ENCODE measurements at regions of chr18 and their contacts with region 1.

Region 1: GRCh38 chr18:54149078-54149697 is 75.3 kb downstream of the MBD2 start:
- DNase-seq: peak in 1 of 9 donors; percentile 48
- ATAC-seq: no peak
- H3K4me3 ChIP-seq: no peak overlapping the region
- H3K4me3 Mint-ChIP-seq: peak overlapping the region in 2 of 10 donors; percentile 30 to 60
- H3K27ac ChIP-seq: no peak overlapping the region
- H3K27ac Mint-ChIP-seq: peak overlapping the region in 6 of 9 donors; percentile 5 to 91 (median 53)
- H3K4me1 ChIP-seq: no peaks in the 10 kb centered on the region
- H3K4me1 Mint-ChIP-seq: peaks cover 0 to 44% (median 8%) of the 10 kb centered on the region in 7 donors
- H3K27me3 ChIP-seq: no peaks in the 10 kb centered on the region
- H3K27me3 Mint-ChIP-seq: no peaks in the 10 kb centered on the region

Region 2: DNA sequence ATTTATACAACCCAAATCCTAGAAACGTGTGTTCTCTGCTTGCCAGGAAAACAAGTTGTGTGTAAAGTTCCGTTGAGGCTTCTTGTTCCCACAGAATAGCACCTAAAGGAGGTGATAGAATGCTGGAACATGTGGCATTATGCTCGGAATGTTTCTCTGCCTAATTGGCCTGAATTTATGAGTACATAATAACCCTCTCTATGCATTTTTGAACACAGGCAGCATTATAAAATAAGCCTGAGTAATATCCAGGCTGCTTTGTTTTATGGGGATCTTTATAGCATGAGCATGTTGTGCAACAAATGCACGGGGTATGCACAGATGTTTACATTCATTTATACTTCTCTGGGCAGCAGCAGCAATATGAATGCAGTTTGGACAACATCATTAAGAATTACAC is 310.4 kb before region 1 on chr18:
- CTCF ChIA-PET with region 1: no interaction called
- POLR2A ChIA-PET with region 1: no interaction called
- intact Hi-C with region 1: no loop called
- DNase-seq: no peak
- ATAC-seq: no peak
- H3K4me3 ChIP-seq: no peak overlapping the region
- H3K4me3 Mint-ChIP-seq: no peak overlapping the region
- H3K27ac ChIP-seq: no peak overlapping the region
- H3K27ac Mint-ChIP-seq: no peak overlapping the region
- H3K4me1 ChIP-seq: no peaks in the 10 kb centered on the region
- H3K4me1 Mint-ChIP-seq: no peaks in the 10 kb centered on the region
- H3K27me3 ChIP-seq: no peaks in the 10 kb centered on the region
- H3K27me3 Mint-ChIP-seq: peaks cover 0 to 4% (median 0%) of the 10 kb centered on the region in 5 donors

Region 3: GRCh38 chr18:53886058-53886457 is 263.1 kb before region 1 on chr18:
- CTCF ChIA-PET with region 1: no interaction called
- POLR2A ChIA-PET with region 1: no interaction called
- intact Hi-C with region 1: no loop called
- DNase-seq: no peak
- ATAC-seq: no peak
- H3K4me3 ChIP-seq: no peak overlapping the region
- H3K4me3 Mint-ChIP-seq: no peak overlapping the region
- H3K27ac ChIP-seq: no peak overlapping the region
- H3K27ac Mint-ChIP-seq: no peak overlapping the region
- H3K4me1 ChIP-seq: no peaks in the 10 kb centered on the region
- H3K4me1 Mint-ChIP-seq: no peaks in the 10 kb centered on the region
- H3K27me3 ChIP-seq: no peaks in the 10 kb centered on the region
- H3K27me3 Mint-ChIP-seq: peaks cover 0 to 10% (median 8%) of the 10 kb centered on the region in 5 donors

Region 4: DNA sequence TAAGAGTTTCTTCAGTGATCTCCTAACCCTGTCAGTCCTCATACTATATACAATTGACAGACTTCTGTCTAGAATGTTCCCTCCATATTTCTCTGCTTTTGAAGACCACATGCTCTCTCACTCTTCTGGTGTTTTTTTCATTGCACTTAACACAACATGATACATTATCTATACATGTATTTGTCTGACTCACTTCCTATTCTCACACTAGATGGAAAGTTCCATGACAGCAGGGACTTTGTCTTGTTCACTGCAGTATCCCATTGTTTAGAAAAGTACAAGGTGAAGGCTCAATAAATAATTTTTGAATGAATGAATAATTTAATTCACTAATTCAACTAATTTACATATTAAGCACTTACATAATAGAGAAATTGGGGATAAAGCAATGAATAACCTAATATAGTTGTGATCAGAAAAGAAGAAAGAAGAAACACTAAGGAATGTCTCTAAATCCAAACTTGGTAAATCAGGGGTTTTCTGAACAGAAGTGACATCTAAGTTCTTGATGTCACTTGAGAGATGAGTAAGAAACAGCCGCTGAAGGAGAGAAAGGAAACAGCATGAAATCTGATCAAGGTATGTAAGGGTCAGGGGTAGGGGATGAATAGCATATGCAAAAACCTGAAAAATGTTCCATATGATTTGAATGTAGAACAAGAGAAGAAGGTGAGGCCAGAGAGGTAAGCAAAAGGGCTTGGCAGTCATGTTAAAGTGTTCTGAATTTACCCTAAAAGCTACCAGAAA is 32.8 kb after region 1 on chr18:
- CTCF ChIA-PET with region 1: no interaction called
- POLR2A ChIA-PET with region 1: no interaction called
- intact Hi-C with region 1: loop called in 1 of 2 experiments (anchors 2 kb)
- DNase-seq: no peak
- ATAC-seq: no peak
- H3K4me3 ChIP-seq: no peak overlapping the region
- H3K4me3 Mint-ChIP-seq: no peak overlapping the region
- H3K27ac ChIP-seq: no peak overlapping the region
- H3K27ac Mint-ChIP-seq: no peak overlapping the region
- H3K4me1 ChIP-seq: no peaks in the 10 kb centered on the region
- H3K4me1 Mint-ChIP-seq: peaks cover under 1 to 9% (median 4%) of the 10 kb centered on the region in 7 donors
- H3K27me3 ChIP-seq: no peaks in the 10 kb centered on the region
- H3K27me3 Mint-ChIP-seq: no peaks in the 10 kb centered on the region

Region 5: DNA sequence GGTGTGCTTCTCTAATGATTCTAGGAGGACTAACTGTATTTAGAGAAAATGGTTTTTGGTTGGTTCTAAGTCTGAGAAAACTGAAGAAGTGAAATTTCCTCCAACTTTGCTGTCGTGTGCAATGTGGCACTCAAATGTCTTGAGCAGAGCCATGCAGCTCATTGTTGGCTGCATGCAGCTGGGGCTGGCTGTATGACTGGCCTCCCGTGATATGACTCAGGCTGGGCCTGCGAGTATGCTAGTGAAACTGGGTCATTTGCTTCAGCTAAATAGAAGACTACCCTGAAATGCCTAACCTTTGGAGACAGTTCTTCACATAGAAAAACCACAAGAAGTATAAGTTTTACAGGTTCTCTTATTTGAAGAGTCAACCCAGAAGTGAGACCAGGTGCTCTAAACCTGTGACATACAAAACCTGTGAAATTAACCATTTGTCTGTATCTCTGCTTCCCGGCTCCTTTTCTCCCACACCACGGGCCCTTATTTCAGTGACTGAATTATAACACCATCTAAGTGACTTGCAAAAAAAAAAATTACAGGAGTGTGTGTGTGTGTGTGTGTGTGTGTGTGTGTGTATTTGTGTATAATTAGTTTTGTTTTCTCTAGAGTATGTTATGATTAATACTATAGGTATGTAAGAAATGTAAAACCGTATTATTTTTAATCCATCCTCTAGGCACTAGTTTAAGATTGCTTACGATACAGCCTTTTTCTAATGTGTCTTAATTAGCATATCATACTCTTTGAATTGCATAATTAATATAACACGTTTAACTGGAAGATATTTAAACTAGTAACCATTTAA is 136.0 kb after region 1 on chr18:
- CTCF ChIA-PET with region 1: no interaction called
- POLR2A ChIA-PET with region 1: no interaction called
- intact Hi-C with region 1: loop called in 1 of 2 experiments (anchors 1 kb)
- DNase-seq: peak in 1 of 9 donors; percentile 60
- ATAC-seq: peak; percentile 51
- H3K4me3 ChIP-seq: no peak overlapping the region
- H3K4me3 Mint-ChIP-seq: peak overlapping the region in 1 of 10 donors; percentile 15
- H3K27ac ChIP-seq: no peak overlapping the region
- H3K27ac Mint-ChIP-seq: peak overlapping the region in 3 of 9 donors; percentile 28 to 29 (median 28)
- H3K4me1 ChIP-seq: peaks cover 0 to 5% of the 10 kb centered on the region in 2 donors
- H3K4me1 Mint-ChIP-seq: peaks cover 1 to 31% (median 7%) of the 10 kb centered on the region in 7 donors
- H3K27me3 ChIP-seq: no peaks in the 10 kb centered on the region
- H3K27me3 Mint-ChIP-seq: no peaks in the 10 kb centered on the region

Measured in naive thymus-derived CD4-positive, alpha-beta T cell (primary cell).